Natural killer cell (primary cell): ENCODE measurements at regions of chr3 and their contacts with region 1.

Region 1: GRCh38 chr3:30693470-30694120 is 87.2 kb downstream of the TGFBR2 start:
- DNase-seq: peak in 1 of 2 donors; percentile 84
- ATAC-seq: peak; percentile 92 to 97 (median 96)
- H3K4me3 ChIP-seq: no peak overlapping the region
- H3K4me3 Mint-ChIP-seq: no peak overlapping the region
- H3K27ac ChIP-seq: no peak overlapping the region
- H3K27ac Mint-ChIP-seq: peak overlapping the region; percentile 60 to 84
- H3K4me1 ChIP-seq: peaks cover 5% of the 10 kb centered on the region
- H3K4me1 Mint-ChIP-seq: peaks cover 56 to 60% of the 10 kb centered on the region in 2 donors
- H3K27me3 ChIP-seq: no peaks in the 10 kb centered on the region
- H3K27me3 Mint-ChIP-seq: no peaks in the 10 kb centered on the region
- CTCF ChIP-seq: peak; percentile 94

Region 2: GRCh38 chr3:30012941-30013543 is 680.6 kb before region 1 on chr3:
- intact Hi-C with region 1: loop called (anchors 2 kb)
- DNase-seq: peak; percentile 18 to 69
- ATAC-seq: peak in 1 of 3 donors; percentile 59
- H3K4me3 ChIP-seq: no peak overlapping the region
- H3K4me3 Mint-ChIP-seq: no peak overlapping the region
- H3K27ac ChIP-seq: no peak overlapping the region
- H3K27ac Mint-ChIP-seq: no peak overlapping the region
- H3K4me1 ChIP-seq: no peaks in the 10 kb centered on the region
- H3K4me1 Mint-ChIP-seq: no peaks in the 10 kb centered on the region
- H3K27me3 ChIP-seq: no peaks in the 10 kb centered on the region
- H3K27me3 Mint-ChIP-seq: no peaks in the 10 kb centered on the region
- CTCF ChIP-seq: peak; percentile 74

Region 3: DNA sequence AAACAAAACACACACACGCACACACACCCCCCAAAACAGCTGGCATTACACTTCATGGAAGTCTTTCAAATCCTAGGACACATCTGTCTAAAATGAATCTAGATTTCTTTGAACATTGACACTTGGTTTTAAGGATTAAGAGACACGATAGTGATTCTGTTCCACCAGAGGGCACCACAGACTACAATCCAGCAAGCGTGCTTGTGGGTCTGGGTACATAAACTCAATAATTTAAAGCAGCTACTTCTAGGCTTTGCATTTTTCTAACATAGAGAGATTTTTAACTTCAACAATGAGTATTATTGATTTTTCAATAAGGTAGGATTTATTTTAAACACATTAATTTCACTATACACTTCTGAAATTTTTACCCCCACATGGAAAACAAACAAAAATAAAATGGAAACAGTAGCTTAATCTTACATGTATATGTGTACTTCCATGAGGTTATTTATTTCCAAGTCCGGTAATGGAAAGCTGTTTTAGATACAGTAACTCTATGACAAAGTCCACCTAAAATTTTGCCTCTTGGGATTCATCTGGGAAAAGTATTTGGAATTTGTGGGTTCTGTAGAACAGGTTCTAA is 651.2 kb before region 1 on chr3:
- intact Hi-C with region 1: loop called (anchors 1 kb)
- DNase-seq: peak in 1 of 2 donors; percentile 79
- ATAC-seq: peak in 1 of 3 donors; percentile 57
- H3K4me3 ChIP-seq: no peak overlapping the region
- H3K4me3 Mint-ChIP-seq: no peak overlapping the region
- H3K27ac ChIP-seq: no peak overlapping the region
- H3K27ac Mint-ChIP-seq: no peak overlapping the region
- H3K4me1 ChIP-seq: no peaks in the 10 kb centered on the region
- H3K4me1 Mint-ChIP-seq: no peaks in the 10 kb centered on the region
- H3K27me3 ChIP-seq: no peaks in the 10 kb centered on the region
- H3K27me3 Mint-ChIP-seq: peaks cover 2 to 25% of the 10 kb centered on the region in 2 donors
- CTCF ChIP-seq: peak; percentile 48

Region 4: GRCh38 chr3:30112902-30113484 is 580.6 kb before region 1 on chr3:
- intact Hi-C with region 1: loop called (anchors 1 kb)
- DNase-seq: peak in 1 of 2 donors; percentile 64
- ATAC-seq: no peak
- H3K4me3 ChIP-seq: no peak overlapping the region
- H3K4me3 Mint-ChIP-seq: no peak overlapping the region
- H3K27ac ChIP-seq: no peak overlapping the region
- H3K27ac Mint-ChIP-seq: no peak overlapping the region
- H3K4me1 ChIP-seq: no peaks in the 10 kb centered on the region
- H3K4me1 Mint-ChIP-seq: no peaks in the 10 kb centered on the region
- H3K27me3 ChIP-seq: no peaks in the 10 kb centered on the region
- H3K27me3 Mint-ChIP-seq: peaks cover 0 to 17% of the 10 kb centered on the region in 2 donors
- CTCF ChIP-seq: no peak

Region 5: GRCh38 chr3:30199096-30199759 is 494.4 kb before region 1 on chr3:
- intact Hi-C with region 1: loop called (anchors 5 kb)
- DNase-seq: peak; percentile 24 to 79
- ATAC-seq: peak in 2 of 3 donors; percentile 49 to 62
- H3K4me3 ChIP-seq: no peak overlapping the region
- H3K4me3 Mint-ChIP-seq: no peak overlapping the region
- H3K27ac ChIP-seq: no peak overlapping the region
- H3K27ac Mint-ChIP-seq: no peak overlapping the region
- H3K4me1 ChIP-seq: no peaks in the 10 kb centered on the region
- H3K4me1 Mint-ChIP-seq: no peaks in the 10 kb centered on the region
- H3K27me3 ChIP-seq: no peaks in the 10 kb centered on the region
- H3K27me3 Mint-ChIP-seq: peaks cover 0 to 8% of the 10 kb centered on the region in 2 donors
- CTCF ChIP-seq: peak; percentile 91

Region 6: DNA sequence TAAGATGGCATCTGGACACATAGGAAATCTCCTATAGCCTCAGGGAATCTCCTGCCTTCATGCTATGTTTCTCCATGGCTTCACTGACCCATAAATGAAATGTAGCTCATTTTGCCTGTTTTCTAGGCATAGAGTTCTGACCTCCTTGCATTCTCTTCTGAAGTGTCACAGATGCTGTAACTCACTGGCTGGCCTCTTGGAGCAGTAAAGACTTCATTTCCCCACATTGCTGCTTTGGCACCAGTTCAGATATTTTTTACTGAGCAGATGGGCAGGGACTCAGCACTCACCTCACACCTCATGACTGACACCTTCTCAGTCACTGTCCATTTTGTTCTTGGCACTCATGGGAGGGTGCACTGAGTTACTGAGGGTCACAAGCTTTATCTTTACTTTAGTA is 373.9 kb before region 1 on chr3:
- intact Hi-C with region 1: loop called (anchors 1 kb)
- DNase-seq: peak in 1 of 2 donors; percentile 76
- ATAC-seq: peak; percentile 80 to 99 (median 94)
- H3K4me3 ChIP-seq: no peak overlapping the region
- H3K4me3 Mint-ChIP-seq: no peak overlapping the region
- H3K27ac ChIP-seq: no peak overlapping the region
- H3K27ac Mint-ChIP-seq: no peak overlapping the region
- H3K4me1 ChIP-seq: no peaks in the 10 kb centered on the region
- H3K4me1 Mint-ChIP-seq: peaks cover 10 to 12% of the 10 kb centered on the region in 2 donors
- H3K27me3 ChIP-seq: no peaks in the 10 kb centered on the region
- H3K27me3 Mint-ChIP-seq: no peaks in the 10 kb centered on the region
- CTCF ChIP-seq: peak; percentile 61

Region 7: DNA sequence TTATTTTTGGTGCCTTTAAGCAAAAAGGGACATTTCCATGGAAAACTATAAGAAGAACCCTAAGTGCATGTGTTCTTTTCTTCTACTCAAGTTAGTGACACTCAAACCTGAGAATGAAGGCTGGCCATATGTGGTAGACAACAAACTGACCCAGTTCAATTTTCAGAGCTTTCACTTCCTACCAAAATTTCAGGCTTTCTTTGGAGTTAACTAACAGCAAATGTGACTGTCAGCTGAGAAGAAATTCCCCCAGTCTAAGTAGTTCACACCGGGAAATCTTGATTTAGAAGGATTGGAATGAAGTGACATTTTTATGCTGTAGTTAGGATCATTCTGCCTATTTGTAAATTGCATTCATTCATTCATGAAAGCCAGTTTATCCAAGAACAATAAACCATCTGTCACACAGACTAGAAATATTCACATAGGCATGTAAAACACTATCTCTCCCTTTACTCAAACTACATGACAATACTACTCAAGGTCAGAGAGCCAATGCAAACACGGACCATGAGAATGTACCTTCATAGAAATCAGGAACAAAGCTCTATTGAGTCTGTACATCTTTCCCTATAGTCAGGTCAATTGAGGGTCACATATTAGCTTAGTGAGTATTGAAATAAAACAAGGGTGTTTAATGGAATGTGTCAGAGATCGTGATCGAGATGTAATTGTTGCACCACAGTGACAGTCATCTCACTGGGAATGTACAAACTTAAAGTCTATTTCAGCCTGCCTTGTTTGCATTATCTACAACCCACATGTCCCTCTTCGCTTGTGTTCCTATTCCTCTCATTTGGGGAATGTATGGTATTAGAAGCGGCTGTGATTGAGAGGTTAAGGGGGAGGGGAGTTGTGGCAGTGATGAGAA is 201.0 kb before region 1 on chr3:
- intact Hi-C with region 1: no loop called
- DNase-seq: no peak
- ATAC-seq: no peak
- H3K4me3 ChIP-seq: no peak overlapping the region
- H3K4me3 Mint-ChIP-seq: no peak overlapping the region
- H3K27ac ChIP-seq: no peak overlapping the region
- H3K27ac Mint-ChIP-seq: no peak overlapping the region
- H3K4me1 ChIP-seq: peaks cover 6% of the 10 kb centered on the region
- H3K4me1 Mint-ChIP-seq: peaks cover 20% of the 10 kb centered on the region in 2 donors
- H3K27me3 ChIP-seq: no peaks in the 10 kb centered on the region
- H3K27me3 Mint-ChIP-seq: peaks cover 0 to 18% of the 10 kb centered on the region in 2 donors
- CTCF ChIP-seq: no peak